AG04449 (cell line): ENCODE measurements at regions of chr5 and their contacts with region 1.

Region 1: GRCh38 chr5:127898551-127899213 is 184.9 kb upstream of the SLC12A2 start:
- DNase-seq: no peak
- H3K4me3 ChIP-seq: no peak overlapping the region
- CTCF ChIP-seq: no peak

Region 2: DNA sequence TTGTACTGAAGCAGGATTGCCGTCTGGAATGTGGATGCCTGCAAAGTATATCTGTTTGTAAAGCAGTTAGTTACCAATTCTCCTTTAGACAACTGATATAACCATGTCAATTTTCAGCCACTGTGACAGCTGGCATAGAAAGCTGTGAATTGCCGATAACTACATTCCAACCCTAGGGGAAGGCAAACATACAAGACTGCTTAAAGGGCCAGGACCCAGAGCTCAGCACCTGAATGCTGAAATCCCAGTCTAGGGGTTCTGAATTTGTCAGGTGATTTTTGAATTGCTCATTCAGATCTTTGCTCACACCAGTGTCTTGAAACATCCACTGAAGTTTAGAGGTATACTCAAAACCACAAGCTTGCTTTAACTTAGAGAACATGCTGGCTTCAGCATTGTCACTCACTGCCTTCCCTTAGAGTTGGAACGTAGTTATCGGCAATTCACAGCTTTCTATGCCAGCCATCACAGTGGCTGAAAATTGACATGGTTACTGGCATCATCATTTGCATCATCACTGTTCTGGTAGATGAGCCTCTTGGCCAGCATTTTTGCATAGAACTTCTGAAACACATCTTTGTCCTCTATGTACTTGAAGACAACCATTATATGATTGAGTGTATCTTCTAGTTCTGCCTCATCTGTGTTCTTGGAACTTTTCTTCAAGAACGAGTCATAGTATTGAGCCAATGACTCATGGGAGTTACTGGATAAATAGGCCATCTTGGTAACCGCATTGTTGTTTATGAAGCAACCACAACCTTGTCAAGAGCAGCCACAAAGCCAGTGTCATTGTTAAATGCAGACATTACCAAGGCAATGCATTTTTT is 113.4 kb before region 1 on chr5:
- CTCF ChIA-PET with region 1: no interaction called
- POLR2A ChIA-PET with region 1: no interaction called
- DNase-seq: peak; percentile 51
- H3K4me3 ChIP-seq: no peak overlapping the region
- CTCF ChIP-seq: no peak

Region 3: GRCh38 chr5:127909078-127909477 is 10.4 kb after region 1 on chr5:
- CTCF ChIA-PET with region 1: interaction called, 27 read pairs
- POLR2A ChIA-PET with region 1: no interaction called
- DNase-seq: no peak
- H3K4me3 ChIP-seq: no peak overlapping the region
- CTCF ChIP-seq: peak; percentile 55